ENCODE measurements at regions of chr12 and their contacts with region 1.

Region 1: DNA sequence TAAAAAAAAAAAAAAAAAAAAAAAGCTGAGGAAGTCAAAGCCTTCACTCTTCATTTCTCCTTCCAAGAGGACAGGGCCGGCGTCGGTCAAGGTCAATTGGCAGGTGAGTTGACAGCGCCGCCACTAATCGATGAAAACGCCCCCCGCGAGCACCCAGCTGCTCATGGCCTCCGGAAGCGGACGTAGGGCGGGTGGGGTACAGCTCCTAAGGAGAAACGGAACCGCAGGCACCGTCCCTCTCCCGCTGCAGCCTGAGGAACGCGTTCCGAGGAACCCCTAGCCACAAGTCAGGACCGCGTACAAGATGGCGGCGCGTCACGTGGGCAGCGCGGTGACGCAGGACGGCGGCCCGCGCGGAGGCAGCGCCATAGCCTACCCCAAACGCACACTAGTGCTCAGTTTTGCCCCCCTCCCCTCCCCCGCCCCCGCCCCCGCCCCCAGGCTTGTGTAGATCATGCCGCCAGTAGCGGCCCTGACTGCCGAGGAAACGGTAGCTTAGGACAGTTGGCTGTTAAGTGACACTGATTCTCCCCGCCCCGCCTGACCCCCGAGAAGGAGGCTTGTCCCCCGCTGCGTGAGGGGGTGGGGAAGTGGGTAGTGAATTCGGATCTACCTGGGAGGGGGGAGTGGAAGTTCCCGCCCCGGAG is at the start of gene ATF1:
- DNase-seq: peak; percentile 92
- H3K4me3 Mint-ChIP-seq: peak within 1 kb of the TSS; percentile 91
- H3K27ac Mint-ChIP-seq: peak within 1 kb of the TSS; percentile 97
- H3K4me1 Mint-ChIP-seq: peaks cover 45% of the 10 kb centered on the region
- H3K27me3 Mint-ChIP-seq: peaks cover 5% of the 10 kb centered on the region

Region 2: GRCh38 chr12:50614167-50614759 is 149.5 kb before region 1 on chr12:
- CTCF ChIA-PET with region 1: no interaction called
- DNase-seq: no peak
- H3K4me3 Mint-ChIP-seq: no peak overlapping the region
- H3K27ac Mint-ChIP-seq: no peak overlapping the region
- H3K4me1 Mint-ChIP-seq: peaks cover under 1% of the 10 kb centered on the region
- H3K27me3 Mint-ChIP-seq: no peaks in the 10 kb centered on the region

Region 3: GRCh38 chr12:50677858-50678257 is 85.9 kb before region 1 on chr12:
- CTCF ChIA-PET with region 1: no interaction called
- DNase-seq: no peak
- H3K4me3 Mint-ChIP-seq: no peak overlapping the region
- H3K27ac Mint-ChIP-seq: no peak overlapping the region
- H3K4me1 Mint-ChIP-seq: no peaks in the 10 kb centered on the region
- H3K27me3 Mint-ChIP-seq: no peaks in the 10 kb centered on the region

Region 4: GRCh38 chr12:50825372-50825838 is 61.6 kb after region 1 on chr12:
- CTCF ChIA-PET with region 1: interaction called, 12 read pairs
- DNase-seq: no peak
- H3K4me3 Mint-ChIP-seq: no peak overlapping the region
- H3K27ac Mint-ChIP-seq: peak overlapping the region; percentile 54
- H3K4me1 Mint-ChIP-seq: peaks cover 5% of the 10 kb centered on the region
- H3K27me3 Mint-ChIP-seq: peaks cover 11% of the 10 kb centered on the region

Measured in activated naive CD4-positive, alpha-beta T cell treated with anti-CD3 and anti-CD28 coated beads, Interleukin-2, amount 10 ng/mL, durations not matched to agents 7 days and 5 days (primary cell).